MCF 10A (cell line): ENCODE measurements at regions of chrX and their contacts with region 1.

Region 1: GRCh38 chrX:54492340-54492739 is 3.7 kb downstream of the FGD1 start:
- DNase-seq: peak; percentile 60
- H3K4me3 Mint-ChIP-seq: no peak overlapping the region
- H3K27ac Mint-ChIP-seq: peak overlapping the region; percentile 69
- H3K4me1 Mint-ChIP-seq: no peaks in the 10 kb centered on the region
- H3K27me3 Mint-ChIP-seq: peaks cover 31% of the 10 kb centered on the region
- CTCF ChIP-seq: no peak

Region 2: GRCh38 chrX:54427837-54428424 is 64.4 kb before region 1 on chrX:
- CTCF ChIA-PET with region 1: no interaction called
- POLR2A ChIA-PET with region 1: no interaction called
- intact Hi-C with region 1: no loop called
- DNase-seq: no peak
- H3K4me3 Mint-ChIP-seq: no peak overlapping the region
- H3K27ac Mint-ChIP-seq: no peak overlapping the region
- H3K4me1 Mint-ChIP-seq: no peaks in the 10 kb centered on the region
- H3K27me3 Mint-ChIP-seq: peaks cover 29% of the 10 kb centered on the region
- CTCF ChIP-seq: no peak

Region 3: DNA sequence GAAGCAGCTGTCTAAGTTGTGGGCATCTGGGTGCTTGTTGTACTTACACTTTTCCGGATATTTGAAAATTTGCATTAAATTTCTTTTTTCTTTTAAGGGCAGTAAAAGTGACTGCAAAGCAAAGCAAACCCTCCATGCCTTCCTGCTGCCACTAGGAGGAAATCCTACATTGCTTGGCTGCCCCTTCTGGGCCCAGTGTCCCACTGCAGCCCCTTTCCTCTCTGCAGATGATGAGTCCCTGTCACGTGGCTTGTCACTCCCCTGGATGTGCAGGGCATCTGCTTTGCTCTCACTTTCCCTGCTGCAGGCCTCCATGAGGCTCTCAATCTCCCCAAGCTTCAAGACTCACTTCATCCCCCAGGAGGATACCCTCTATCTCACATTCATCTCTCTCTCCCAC is 39.4 kb before region 1 on chrX:
- CTCF ChIA-PET with region 1: no interaction called
- POLR2A ChIA-PET with region 1: no interaction called
- intact Hi-C with region 1: no loop called
- DNase-seq: no peak
- H3K4me3 Mint-ChIP-seq: no peak overlapping the region
- H3K27ac Mint-ChIP-seq: no peak overlapping the region
- H3K4me1 Mint-ChIP-seq: no peaks in the 10 kb centered on the region
- H3K27me3 Mint-ChIP-seq: peaks cover 27% of the 10 kb centered on the region
- CTCF ChIP-seq: no peak

Region 4: DNA sequence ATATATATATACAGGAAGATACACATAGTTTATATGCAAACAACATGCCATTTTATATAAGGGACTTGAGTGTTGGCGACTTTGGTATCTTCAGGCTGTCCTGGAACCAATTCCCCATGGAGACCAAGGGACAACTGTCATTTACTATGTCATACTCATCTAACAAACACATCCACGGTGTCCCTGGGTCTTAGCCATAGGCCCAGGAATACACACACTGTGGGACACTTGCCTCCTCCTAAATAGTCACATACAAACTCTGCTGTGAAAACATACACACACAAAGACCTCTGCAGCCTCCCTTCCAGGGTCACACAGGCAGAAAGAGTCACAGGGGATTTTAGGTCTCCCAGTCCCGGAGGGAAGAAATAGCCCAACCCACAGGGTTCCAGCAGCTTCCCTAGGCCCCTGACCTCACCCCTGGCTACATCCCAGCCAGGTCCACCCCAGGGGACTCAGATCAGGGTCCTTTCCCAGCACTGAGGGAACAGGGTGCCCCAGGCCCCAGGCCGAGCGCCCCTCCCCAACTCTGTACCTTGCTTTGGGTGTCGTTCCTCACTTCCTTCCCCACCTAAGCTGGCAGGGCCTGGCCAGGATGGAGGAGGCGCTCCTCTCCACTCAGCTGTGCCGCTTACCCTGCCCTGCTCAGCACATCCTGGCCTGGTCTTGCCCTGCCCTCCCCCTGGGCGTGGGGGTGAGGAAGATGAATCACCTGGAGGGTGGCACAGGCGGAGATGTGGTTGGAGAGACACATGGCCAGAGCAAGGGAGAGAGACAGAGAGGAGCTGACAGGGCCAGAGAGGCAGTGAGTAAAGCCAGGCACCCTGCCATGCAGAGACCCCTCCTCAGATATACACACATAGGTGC is 18.1 kb before region 1 on chrX:
- CTCF ChIA-PET with region 1: interaction called, 3 read pairs
- POLR2A ChIA-PET with region 1: interaction called, 3 read pairs
- intact Hi-C with region 1: loop called (anchors 1 kb)
- DNase-seq: peak; percentile 77
- H3K4me3 Mint-ChIP-seq: peak overlapping the region; percentile 70
- H3K27ac Mint-ChIP-seq: peak overlapping the region; percentile 14
- H3K4me1 Mint-ChIP-seq: peaks cover 20% of the 10 kb centered on the region
- H3K27me3 Mint-ChIP-seq: peaks cover 28% of the 10 kb centered on the region
- CTCF ChIP-seq: no peak

Region 5: GRCh38 chrX:54708404-54708803 is 216.1 kb after region 1 on chrX:
- CTCF ChIA-PET with region 1: no interaction called
- POLR2A ChIA-PET with region 1: no interaction called
- intact Hi-C with region 1: no loop called
- DNase-seq: no peak
- H3K4me3 Mint-ChIP-seq: no peak overlapping the region
- H3K27ac Mint-ChIP-seq: no peak overlapping the region
- H3K4me1 Mint-ChIP-seq: no peaks in the 10 kb centered on the region
- H3K27me3 Mint-ChIP-seq: peaks cover 54% of the 10 kb centered on the region
- CTCF ChIP-seq: no peak